ENCODE measurements at regions of chr2 and their contacts with region 1.

Region 1: DNA sequence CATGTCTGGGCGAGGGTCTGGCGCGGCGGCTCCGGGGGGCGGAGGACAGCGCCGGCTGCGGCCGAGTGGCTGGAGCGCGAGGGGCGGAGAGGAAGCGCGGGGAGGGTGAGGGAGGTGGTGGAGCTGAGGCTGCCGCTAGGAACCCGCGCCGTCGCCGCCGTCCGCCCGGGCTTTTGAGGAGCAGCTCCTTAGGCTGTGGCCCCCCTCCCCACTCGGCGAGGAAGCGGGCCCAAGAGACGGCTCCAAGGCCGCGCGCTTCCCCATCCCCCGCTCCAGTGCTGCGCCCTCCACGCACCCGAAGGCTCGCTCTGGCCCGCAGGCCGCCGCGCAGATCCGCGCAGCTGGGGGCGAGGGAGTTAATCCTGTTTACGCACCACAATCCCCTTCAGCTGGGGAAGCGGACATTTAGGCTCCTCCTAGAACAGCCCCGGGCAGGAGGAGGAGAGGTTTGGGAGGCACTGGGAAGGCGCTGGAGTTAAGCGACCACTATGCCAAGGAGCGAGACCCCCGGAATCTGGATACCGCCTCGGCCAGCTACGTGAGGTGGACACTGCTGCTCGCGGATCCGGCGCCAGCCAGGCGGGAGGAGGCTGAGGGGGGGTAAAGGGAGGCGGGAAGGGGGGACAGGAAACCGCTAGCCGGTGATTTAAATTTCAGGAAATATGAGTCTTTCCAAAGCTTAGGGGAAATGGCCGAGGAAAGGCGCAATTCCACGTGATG is at the start of gene CNRIP1:
- DNase-seq: peak; percentile 16 to 41 (median 26)
- ATAC-seq: peak; percentile 82
- H3K4me3 ChIP-seq: peak within 1 kb of the TSS; percentile 45
- H3K27ac ChIP-seq: peak within 1 kb of the TSS; percentile 43; the same call in 1 of the 3 replicates
- H3K4me1 ChIP-seq: peaks cover 0 to 15% of the 10 kb centered on the region in 2 experiments; a peak in 2 of 5 replicates
- H3K27me3 ChIP-seq: no peaks in the 10 kb centered on the region
- CTCF ChIP-seq: no peak
- EP300 ChIP-seq: no peak
- POLR2A ChIP-seq: no peak
- RAD21 ChIP-seq: no peak
- polyA plus RNA-seq, gene CNRIP1: 1.3 to 1.6 TPM

Region 2: GRCh38 chr2:68309426-68309825 is 10.1 kb before region 1 on chr2:
- CTCF ChIA-PET with region 1: no interaction called
- POLR2A ChIA-PET with region 1: interaction called, 10 read pairs
- in situ Hi-C with region 1: no loop called
- intact Hi-C with region 1: no loop called
- DNase-seq: no peak
- ATAC-seq: no peak
- H3K4me3 ChIP-seq: no peak overlapping the region
- H3K27ac ChIP-seq: no peak overlapping the region
- H3K4me1 ChIP-seq: peaks cover 4 to 6% of the 10 kb centered on the region in 2 experiments; a peak in 3 of 5 replicates
- H3K27me3 ChIP-seq: no peaks in the 10 kb centered on the region
- CTCF ChIP-seq: no peak
- EP300 ChIP-seq: no peak
- POLR2A ChIP-seq: no peak
- RAD21 ChIP-seq: no peak

Region 3: DNA sequence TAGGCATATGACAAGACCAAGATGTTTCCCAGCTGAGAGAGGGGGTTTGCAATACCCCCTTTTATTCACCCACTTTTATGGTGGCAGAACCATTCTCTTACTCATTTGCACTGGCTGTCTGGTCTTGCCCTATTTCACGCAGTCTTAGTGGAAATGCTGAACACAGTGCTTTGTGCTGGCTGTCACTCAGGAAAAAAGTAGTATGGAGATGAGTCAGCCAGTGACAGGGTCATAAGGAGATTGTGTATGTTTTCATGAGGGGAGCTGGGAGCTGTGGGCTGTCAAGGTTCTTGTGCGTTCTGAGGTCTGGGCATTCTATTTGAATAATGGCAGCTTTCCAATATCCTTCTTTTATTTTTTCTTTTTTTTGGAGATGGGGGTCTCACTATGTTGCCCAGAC is 11.1 kb after region 1 on chr2:
- CTCF ChIA-PET with region 1: no interaction called
- POLR2A ChIA-PET with region 1: interaction called, 13 read pairs
- in situ Hi-C with region 1: no loop called
- intact Hi-C with region 1: no loop called
- DNase-seq: peak in 3 of 4 experiments; percentile 20 to 56 (median 33)
- ATAC-seq: peak; percentile 74
- H3K4me3 ChIP-seq: no peak overlapping the region
- H3K27ac ChIP-seq: no peak overlapping the region
- H3K4me1 ChIP-seq: peaks cover 0 to 4% of the 10 kb centered on the region in 2 experiments; a peak in 1 of 5 replicates
- H3K27me3 ChIP-seq: no peaks in the 10 kb centered on the region
- CTCF ChIP-seq: no peak
- EP300 ChIP-seq: no peak
- POLR2A ChIP-seq: no peak
- RAD21 ChIP-seq: no peak

Measured in K562 (cell line).